AG04449 (cell line): ENCODE measurements at regions of chr6 and their contacts with region 1.

Region 1: DNA sequence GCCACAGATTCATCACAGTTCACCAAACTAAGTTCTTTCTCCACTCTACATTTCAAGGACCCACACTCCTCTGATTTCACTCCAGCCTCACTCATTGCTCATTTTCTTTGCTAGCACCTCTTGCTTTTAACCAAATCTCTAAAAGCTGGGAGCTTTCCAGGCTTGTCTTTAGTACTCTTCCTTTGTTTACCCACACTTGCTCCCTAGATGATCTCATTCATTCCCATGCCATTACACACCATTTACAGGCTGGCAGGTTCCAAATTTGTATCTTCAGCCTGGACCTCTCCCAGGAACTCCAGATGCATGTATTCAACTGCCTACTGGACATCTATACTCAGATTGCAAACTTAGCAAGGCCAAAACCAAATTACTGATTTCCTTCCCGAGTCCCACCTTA is 5.3 kb upstream of the GUCA1B start:
- DNase-seq: peak; percentile 87
- H3K4me3 ChIP-seq: no peak overlapping the region
- CTCF ChIP-seq: no peak

Region 2: DNA sequence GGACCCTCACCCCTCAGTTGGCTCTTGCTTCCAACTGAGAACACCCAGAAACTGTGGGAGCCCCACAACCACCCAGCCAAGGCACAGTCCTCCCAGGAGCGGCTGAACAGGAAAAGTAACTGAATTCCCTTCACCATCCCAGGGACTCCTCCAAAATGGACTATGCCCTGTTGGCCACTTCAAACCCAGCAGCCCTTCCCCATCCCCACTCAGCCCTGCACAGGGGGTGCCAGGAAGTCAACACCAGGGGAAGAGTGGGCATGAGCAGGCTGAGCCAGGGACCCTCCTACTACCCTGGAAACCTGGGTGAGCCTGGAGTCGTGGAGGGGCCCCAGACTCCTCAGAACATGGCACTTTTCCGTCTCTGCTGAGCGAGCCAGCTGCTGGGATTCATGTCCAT is 15.6 kb before region 1 on chr6:
- CTCF ChIA-PET with region 1: no interaction called
- POLR2A ChIA-PET with region 1: no interaction called
- DNase-seq: no peak
- H3K4me3 ChIP-seq: no peak overlapping the region
- CTCF ChIP-seq: no peak

Region 3: DNA sequence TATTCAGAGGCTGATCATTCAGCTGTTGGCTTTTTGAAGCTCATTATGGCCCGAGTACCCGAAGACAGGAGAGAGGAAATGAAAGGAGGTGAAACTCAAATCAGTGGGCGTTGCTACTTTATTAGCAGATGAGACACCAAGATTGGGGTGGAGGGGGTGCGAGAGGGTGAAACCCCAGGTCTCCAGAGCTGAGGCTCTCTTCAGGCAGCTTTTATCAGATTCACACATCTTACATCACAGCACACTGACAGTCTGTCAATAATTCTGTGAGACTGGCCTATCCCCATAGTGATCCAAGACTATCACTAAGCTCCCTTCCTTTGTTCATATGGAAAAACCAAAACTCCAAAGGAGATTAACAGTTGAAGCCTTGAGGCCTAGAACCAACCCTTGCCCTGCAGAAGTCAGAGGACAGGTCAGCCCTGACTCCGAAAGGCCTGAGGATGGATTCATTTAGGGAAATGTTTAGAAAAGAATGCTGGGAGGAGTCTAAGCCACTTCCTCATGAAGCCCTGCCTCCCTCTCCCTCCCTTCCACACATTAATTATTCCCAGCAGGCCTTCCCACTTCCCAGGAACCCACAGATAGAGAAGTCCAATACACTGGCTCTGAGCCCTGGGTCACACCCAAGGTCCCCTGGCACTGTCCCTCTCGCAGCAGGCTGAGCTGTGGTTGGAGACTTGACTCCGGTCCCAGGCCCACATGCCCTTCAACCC is 228.4 kb after region 1 on chr6:
- CTCF ChIA-PET with region 1: no interaction called
- POLR2A ChIA-PET with region 1: no interaction called
- DNase-seq: no peak
- H3K4me3 ChIP-seq: no peak overlapping the region
- CTCF ChIP-seq: no peak

Region 4: DNA sequence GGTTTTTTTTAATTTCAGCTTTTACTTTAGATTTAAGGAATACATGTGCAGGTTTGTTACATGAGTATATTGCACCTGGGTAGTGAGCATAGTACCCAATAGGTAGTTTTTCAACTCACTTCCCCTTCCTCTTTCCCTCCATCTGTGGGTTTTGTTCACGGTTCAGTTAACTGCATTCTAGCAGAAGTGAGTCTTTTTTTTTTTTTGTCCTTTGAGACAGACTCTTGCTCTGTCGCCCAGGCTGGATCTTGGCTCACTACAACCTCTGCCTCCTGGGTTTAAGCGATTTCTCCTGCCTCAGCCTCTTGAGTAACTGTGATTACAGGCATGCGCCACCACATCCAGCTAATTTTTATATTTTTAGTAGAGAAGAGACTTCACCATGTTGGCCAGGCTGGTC is 372.5 kb after region 1 on chr6:
- CTCF ChIA-PET with region 1: no interaction called
- POLR2A ChIA-PET with region 1: interaction called, 11 read pairs
- DNase-seq: no peak
- H3K4me3 ChIP-seq: no peak overlapping the region
- CTCF ChIP-seq: no peak